Vagina (tissue), 2 donors: ENCODE measurements at regions of chr2 and their contacts with region 1.

Region 1: DNA sequence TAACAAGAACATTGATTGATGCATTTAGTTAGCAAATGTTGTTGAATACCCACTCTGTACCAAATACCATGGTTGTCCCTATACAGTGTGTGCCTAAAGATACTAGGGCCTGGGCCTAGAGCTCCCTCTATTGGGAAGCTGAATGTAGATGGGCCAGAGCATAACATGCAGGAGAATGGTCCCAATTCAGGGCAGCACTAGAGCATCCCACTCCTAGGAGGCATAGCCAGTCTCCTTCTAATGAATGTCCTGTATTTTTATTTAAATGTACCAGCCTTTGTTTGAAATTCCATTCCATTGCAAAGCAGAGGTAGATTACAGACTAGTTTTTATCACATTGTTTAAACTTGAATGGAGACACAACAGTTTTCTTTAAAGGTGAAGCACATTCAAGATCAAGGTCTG is 90.6 kb downstream of the FEZ2 start:
- DNase-seq: no peak
- H3K4me3 ChIP-seq: no peak overlapping the region
- H3K27ac ChIP-seq: no peak overlapping the region
- H3K4me1 ChIP-seq: no peaks in the 10 kb centered on the region
- H3K27me3 ChIP-seq: no peaks in the 10 kb centered on the region
- CTCF ChIP-seq: peak in 1 of 3 experiments; percentile 47
- POLR2A ChIP-seq: no peak

Region 2: GRCh38 chr2:36536776-36537175 is 29.4 kb after region 1 on chr2:
- intact Hi-C with region 1: loop called (anchors 1 kb)
- DNase-seq: no peak
- H3K4me3 ChIP-seq: no peak overlapping the region
- H3K27ac ChIP-seq: no peak overlapping the region
- H3K4me1 ChIP-seq: no peaks in the 10 kb centered on the region
- H3K27me3 ChIP-seq: no peaks in the 10 kb centered on the region
- CTCF ChIP-seq: no peak
- POLR2A ChIP-seq: no peak

Region 3: GRCh38 chr2:36589230-36589630 is 81.8 kb after region 1 on chr2:
- intact Hi-C with region 1: no loop called
- DNase-seq: no peak
- H3K4me3 ChIP-seq: no peak overlapping the region
- H3K27ac ChIP-seq: no peak overlapping the region
- H3K4me1 ChIP-seq: peaks cover 10% of the 10 kb centered on the region
- H3K27me3 ChIP-seq: no peaks in the 10 kb centered on the region
- CTCF ChIP-seq: no peak
- POLR2A ChIP-seq: no peak